Naive thymus-derived CD4-positive, alpha-beta T cell (primary cell): ENCODE measurements at regions of chr12 and their contacts with region 1.

Region 1: GRCh38 chr12:59595883-59596540 is at the start of gene SLC16A7:
- DNase-seq: peak; percentile 60 to 82 (median 76)
- ATAC-seq: peak; percentile 69
- H3K4me3 ChIP-seq: peak within 1 kb of the TSS; percentile 84
- H3K4me3 Mint-ChIP-seq: peak within 1 kb of the TSS; percentile 87 to 99 (median 95)
- H3K27ac ChIP-seq: peak within 1 kb of the TSS; percentile 89
- H3K27ac Mint-ChIP-seq: peak within 1 kb of the TSS; percentile 93 to 99 (median 97)
- H3K4me1 ChIP-seq: peaks cover 18 to 22% of the 10 kb centered on the region in 2 donors
- H3K4me1 Mint-ChIP-seq: peaks cover 28 to 69% (median 64%) of the 10 kb centered on the region in 7 donors
- H3K27me3 ChIP-seq: no peaks in the 10 kb centered on the region
- H3K27me3 Mint-ChIP-seq: no peaks in the 10 kb centered on the region
- total RNA-seq, gene SLC16A7: 32.3 to 57.5 (median 40.4) TPM

Region 2: DNA sequence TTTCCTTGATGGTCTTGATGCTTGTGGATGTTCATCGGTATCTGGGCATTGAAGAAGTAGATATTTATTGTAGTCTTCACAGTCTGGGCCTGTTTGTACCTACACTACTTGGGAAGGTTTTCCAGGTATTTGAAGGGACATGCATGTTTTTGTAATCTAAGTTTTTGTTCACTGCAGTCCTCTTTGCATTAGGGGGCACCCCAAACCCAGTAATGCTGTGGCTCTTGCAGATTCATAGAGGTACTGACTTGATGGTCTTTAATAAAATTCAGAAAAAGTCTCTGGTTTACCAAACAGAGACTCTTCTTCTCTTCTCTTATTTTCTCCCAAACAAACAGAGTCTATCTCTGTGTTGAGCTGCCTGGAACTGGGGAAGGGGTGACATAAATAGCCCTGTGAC is 151.1 kb before region 1 on chr12:
- CTCF ChIA-PET with region 1: no interaction called
- POLR2A ChIA-PET with region 1: no interaction called
- intact Hi-C with region 1: loop called in 1 of 2 experiments (anchors 1 kb)
- DNase-seq: peak in 5 of 9 donors; percentile 15 to 41 (median 26)
- ATAC-seq: no peak
- H3K4me3 ChIP-seq: no peak overlapping the region
- H3K4me3 Mint-ChIP-seq: no peak overlapping the region
- H3K27ac ChIP-seq: no peak overlapping the region
- H3K27ac Mint-ChIP-seq: no peak overlapping the region
- H3K4me1 ChIP-seq: no peaks in the 10 kb centered on the region
- H3K4me1 Mint-ChIP-seq: no peaks in the 10 kb centered on the region
- H3K27me3 ChIP-seq: no peaks in the 10 kb centered on the region
- H3K27me3 Mint-ChIP-seq: peaks cover 0 to 19% (median 9%) of the 10 kb centered on the region in 5 donors

Region 3: DNA sequence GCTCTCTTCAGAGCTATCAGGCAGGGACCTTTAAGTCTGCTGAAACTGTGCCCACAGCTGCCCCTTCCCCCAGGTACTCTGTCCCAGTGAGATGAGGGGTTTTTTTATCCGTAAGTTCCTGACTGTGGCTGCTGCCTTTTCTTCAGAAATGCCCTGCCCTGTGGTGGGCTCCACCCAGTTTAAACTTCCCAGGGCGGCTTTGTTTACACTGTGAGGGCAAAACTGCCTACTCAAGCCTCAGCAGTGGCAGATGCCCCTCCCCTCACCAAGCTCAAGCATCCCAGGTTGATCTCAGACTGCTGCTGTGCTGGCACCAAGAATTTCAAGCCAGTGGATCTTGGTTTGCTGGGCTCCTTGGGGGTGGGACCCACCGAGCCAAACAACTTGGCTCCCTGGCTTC is 47.1 kb before region 1 on chr12:
- CTCF ChIA-PET with region 1: no interaction called
- POLR2A ChIA-PET with region 1: interaction called, 5 read pairs
- intact Hi-C with region 1: loop called in 1 of 2 experiments (anchors 2 kb)
- DNase-seq: peak in 5 of 9 donors; percentile 2 to 32 (median 10)
- ATAC-seq: peak; percentile 46
- H3K4me3 ChIP-seq: no peak overlapping the region
- H3K4me3 Mint-ChIP-seq: peak overlapping the region in 1 of 10 donors; percentile 44
- H3K27ac ChIP-seq: no peak overlapping the region
- H3K27ac Mint-ChIP-seq: no peak overlapping the region
- H3K4me1 ChIP-seq: no peaks in the 10 kb centered on the region
- H3K4me1 Mint-ChIP-seq: peaks cover 0 to 27% (median 23%) of the 10 kb centered on the region in 7 donors
- H3K27me3 ChIP-seq: no peaks in the 10 kb centered on the region
- H3K27me3 Mint-ChIP-seq: peaks cover 0 to 3% (median 0%) of the 10 kb centered on the region in 5 donors

Region 4: DNA sequence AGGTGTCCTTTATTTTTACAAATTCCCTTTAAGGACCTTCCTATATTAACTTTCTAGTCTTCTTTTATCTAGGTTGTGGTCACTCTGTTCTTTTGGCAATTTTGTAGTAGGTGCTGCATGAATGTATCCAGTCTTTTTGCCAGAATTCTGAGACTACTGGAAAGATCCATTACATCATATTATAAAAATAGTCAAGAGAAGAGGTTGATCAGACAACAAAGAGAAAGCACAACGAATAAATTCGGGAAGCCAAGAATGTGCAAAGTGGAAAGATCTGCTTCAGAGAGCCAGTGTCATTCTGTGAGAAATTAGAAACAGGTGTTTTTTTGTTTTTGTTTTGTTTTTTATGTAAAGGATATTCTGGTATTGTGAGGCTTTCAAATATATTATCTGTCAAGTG is 16.0 kb before region 1 on chr12:
- CTCF ChIA-PET with region 1: interaction called, 4 read pairs
- POLR2A ChIA-PET with region 1: interaction called, 6 read pairs
- intact Hi-C with region 1: loop called (anchors 1 kb)
- DNase-seq: no peak
- ATAC-seq: no peak
- H3K4me3 ChIP-seq: no peak overlapping the region
- H3K4me3 Mint-ChIP-seq: no peak overlapping the region
- H3K27ac ChIP-seq: no peak overlapping the region
- H3K27ac Mint-ChIP-seq: no peak overlapping the region
- H3K4me1 ChIP-seq: peaks cover 18 to 21% of the 10 kb centered on the region in 2 donors
- H3K4me1 Mint-ChIP-seq: peaks cover 34 to 55% (median 49%) of the 10 kb centered on the region in 7 donors
- H3K27me3 ChIP-seq: no peaks in the 10 kb centered on the region
- H3K27me3 Mint-ChIP-seq: no peaks in the 10 kb centered on the region

Region 5: DNA sequence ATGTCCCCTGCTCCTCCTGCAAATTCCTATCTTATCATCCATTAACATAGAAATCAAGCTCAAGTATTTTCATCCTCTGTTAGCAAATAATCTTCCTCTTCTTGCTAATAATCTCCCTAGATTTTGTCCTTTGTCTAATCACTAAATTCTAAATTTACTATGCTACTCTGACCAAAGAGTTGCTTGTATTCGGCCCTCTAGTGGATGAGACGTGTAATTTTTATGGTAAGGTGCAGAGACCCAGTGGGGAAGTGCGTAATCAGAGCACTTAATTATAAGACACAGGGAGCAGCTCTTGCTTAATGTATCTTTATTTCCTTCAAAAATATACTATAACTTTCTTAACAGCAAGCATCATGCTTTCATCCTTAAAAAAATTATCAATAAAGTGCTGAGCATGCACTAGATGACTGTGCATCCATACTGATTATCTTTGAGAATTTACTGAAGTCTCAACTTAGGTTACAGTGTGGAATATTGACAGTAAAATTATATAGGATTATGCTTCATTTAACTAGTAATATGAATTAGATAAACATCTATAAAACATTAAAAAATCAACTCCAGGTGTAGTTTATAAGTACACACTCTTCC is 212.4 kb after region 1 on chr12:
- CTCF ChIA-PET with region 1: interaction called, 4 read pairs
- POLR2A ChIA-PET with region 1: no interaction called
- intact Hi-C with region 1: loop called (anchors 1 kb)
- DNase-seq: peak in 6 of 9 donors; percentile 16 to 44 (median 34)
- ATAC-seq: peak; percentile 81
- H3K4me3 ChIP-seq: no peak overlapping the region
- H3K4me3 Mint-ChIP-seq: no peak overlapping the region
- H3K27ac ChIP-seq: no peak overlapping the region
- H3K27ac Mint-ChIP-seq: no peak overlapping the region
- H3K4me1 ChIP-seq: no peaks in the 10 kb centered on the region
- H3K4me1 Mint-ChIP-seq: peaks cover 0 to 5% (median 0%) of the 10 kb centered on the region in 7 donors
- H3K27me3 ChIP-seq: no peaks in the 10 kb centered on the region
- H3K27me3 Mint-ChIP-seq: no peaks in the 10 kb centered on the region

Region 6: DNA sequence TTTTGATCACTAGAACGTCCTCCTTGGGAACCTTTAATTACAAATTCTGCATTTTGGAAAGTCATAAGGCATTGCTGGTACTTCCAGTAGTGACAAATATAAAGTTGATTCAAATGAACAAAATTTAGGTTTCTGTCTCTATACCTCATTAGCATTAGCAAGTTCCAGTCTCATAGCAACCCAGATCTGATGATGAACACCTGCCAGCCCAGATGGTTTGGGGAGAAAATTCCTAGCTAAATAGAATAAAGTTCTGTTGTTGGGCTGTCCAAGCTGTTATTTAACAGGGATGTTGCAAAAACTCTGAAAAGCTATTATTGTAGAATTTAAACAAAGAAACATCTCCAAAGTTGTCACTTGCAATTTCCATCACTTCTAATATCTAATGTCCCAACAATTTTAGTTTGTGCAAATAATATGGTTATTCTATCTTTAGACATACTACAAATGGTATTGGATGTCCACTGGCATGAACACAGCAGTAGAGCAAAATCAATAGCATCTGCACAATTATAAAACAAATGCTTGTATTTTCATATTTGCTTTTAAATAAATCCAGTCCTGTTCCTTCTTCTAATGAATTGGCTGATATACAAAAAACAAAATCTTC is 299.3 kb after region 1 on chr12:
- CTCF ChIA-PET with region 1: no interaction called
- POLR2A ChIA-PET with region 1: no interaction called
- intact Hi-C with region 1: no loop called
- DNase-seq: no peak
- ATAC-seq: no peak
- H3K4me3 ChIP-seq: no peak overlapping the region
- H3K4me3 Mint-ChIP-seq: no peak overlapping the region
- H3K27ac ChIP-seq: no peak overlapping the region
- H3K27ac Mint-ChIP-seq: no peak overlapping the region
- H3K4me1 ChIP-seq: no peaks in the 10 kb centered on the region
- H3K4me1 Mint-ChIP-seq: no peaks in the 10 kb centered on the region
- H3K27me3 ChIP-seq: no peaks in the 10 kb centered on the region
- H3K27me3 Mint-ChIP-seq: no peaks in the 10 kb centered on the region